ENCODE measurements at regions of chr1 and their contacts with region 1.

Region 1: DNA sequence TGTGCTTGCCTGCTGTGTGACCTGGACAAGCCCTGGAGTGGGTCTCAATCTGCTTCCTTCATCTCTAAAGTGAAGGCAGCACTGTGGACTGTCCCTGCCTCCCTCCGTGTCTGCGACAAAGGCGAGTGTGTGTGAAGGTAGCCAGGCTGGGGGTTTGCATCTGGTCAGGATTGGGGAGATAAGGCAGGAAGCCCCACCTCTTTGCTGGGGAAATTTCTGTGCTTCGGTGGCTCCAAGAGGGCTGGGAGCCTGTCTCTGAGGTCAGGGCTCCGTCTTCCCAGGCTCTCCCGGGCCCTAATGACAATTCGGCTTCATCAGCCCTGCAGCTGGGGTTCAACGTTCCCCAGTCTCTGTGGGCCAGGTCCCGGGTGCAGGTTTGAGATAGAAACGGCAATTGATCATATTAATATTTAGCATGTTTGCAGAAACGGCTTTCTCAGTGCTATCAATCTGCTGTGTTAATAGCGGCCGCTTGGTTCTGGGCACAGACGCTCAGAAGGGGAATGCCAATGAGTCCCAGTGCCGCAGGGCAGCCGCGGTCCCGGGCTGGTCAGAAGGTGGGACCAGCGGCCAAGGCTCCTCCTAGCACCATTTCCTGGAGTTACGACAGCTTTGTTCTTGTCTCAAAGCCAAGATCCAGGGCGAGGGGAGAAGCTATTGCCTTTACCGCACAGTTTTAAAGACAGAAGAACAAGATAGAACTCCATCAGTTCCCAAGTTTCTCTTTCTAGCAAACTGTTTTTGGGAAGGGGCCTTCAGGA is 105.7 kb downstream of the PRDM16 start:
- DNase-seq: peak; percentile 59 to 94
- H3K4me3 ChIP-seq: peak overlapping the region in 1 of 2 donors; percentile 51
- H3K27ac ChIP-seq: peak overlapping the region; percentile 91 to 93
- H3K4me1 ChIP-seq: peaks cover 25 to 62% of the 10 kb centered on the region in 2 donors
- H3K27me3 ChIP-seq: no peaks in the 10 kb centered on the region
- CTCF ChIP-seq: no peak

Region 2: GRCh38 chr1:3133686-3134085 is 41.0 kb before region 1 on chr1:
- intact Hi-C with region 1: loop called (anchors 2 kb)
- DNase-seq: peak in 1 of 2 donors; percentile 81
- H3K4me3 ChIP-seq: peak overlapping the region; percentile 24 to 45
- H3K27ac ChIP-seq: peak overlapping the region; percentile 83 to 85
- H3K4me1 ChIP-seq: peaks cover 32 to 83% of the 10 kb centered on the region in 2 donors
- H3K27me3 ChIP-seq: no peaks in the 10 kb centered on the region
- CTCF ChIP-seq: no peak

Region 3: DNA sequence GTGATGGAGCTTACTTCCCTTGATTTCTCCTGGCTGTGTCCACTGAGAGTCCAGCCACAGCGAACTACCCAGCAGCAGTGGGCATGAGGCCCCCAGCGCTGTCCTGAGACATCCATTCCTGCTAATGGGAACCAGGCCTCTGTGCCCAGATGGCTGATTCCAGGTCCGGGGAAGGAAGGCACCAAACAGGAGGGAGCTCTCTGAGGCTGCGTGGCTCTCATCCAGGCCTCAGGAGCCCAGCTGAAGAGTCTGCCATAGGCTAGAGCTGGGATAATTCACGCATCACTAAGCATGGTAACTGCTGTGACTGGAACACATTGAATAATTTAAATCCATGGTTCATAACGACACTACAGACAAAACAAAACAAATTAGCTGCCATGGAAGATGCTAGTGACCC is 646.3 kb after region 1 on chr1:
- intact Hi-C with region 1: no loop called
- DNase-seq: no peak
- H3K4me3 ChIP-seq: no peak overlapping the region
- H3K27ac ChIP-seq: no peak overlapping the region
- H3K4me1 ChIP-seq: no peaks in the 10 kb centered on the region
- H3K27me3 ChIP-seq: no peaks in the 10 kb centered on the region
- CTCF ChIP-seq: no peak

Measured in ascending aorta (tissue), 2 donors.